Body of pancreas (tissue), 4 donors: ENCODE measurements at regions of chr16 and their contacts with region 1.

Region 1: GRCh38 chr16:813204-813915 is 12.8 kb upstream of the GNG13 start:
- DNase-seq: peak in 3 of 4 donors; percentile 27 to 48 (median 45)
- ATAC-seq: peak; percentile 45
- H3K4me3 ChIP-seq: no peak overlapping the region
- H3K27ac ChIP-seq: no peak overlapping the region
- H3K4me1 ChIP-seq: peaks cover 12% of the 10 kb centered on the region
- H3K27me3 ChIP-seq: peaks cover 0 to 21% of the 10 kb centered on the region in 2 donors
- CTCF ChIP-seq: peak in 6 of 7 experiments; percentile 28 to 59 (median 45)
- POLR2A ChIP-seq: no peak

Region 2: GRCh38 chr16:728131-728889 is 85.0 kb before region 1 on chr16:
- intact Hi-C with region 1: no loop called
- DNase-seq: peak in 3 of 4 donors; percentile 53 to 66 (median 57)
- ATAC-seq: peak; percentile 33
- H3K4me3 ChIP-seq: no peak overlapping the region
- H3K27ac ChIP-seq: no peak overlapping the region
- H3K4me1 ChIP-seq: peaks cover 31% of the 10 kb centered on the region
- H3K27me3 ChIP-seq: peaks cover 0 to 7% of the 10 kb centered on the region in 2 donors
- CTCF ChIP-seq: no peak
- POLR2A ChIP-seq: no peak

Region 3: DNA sequence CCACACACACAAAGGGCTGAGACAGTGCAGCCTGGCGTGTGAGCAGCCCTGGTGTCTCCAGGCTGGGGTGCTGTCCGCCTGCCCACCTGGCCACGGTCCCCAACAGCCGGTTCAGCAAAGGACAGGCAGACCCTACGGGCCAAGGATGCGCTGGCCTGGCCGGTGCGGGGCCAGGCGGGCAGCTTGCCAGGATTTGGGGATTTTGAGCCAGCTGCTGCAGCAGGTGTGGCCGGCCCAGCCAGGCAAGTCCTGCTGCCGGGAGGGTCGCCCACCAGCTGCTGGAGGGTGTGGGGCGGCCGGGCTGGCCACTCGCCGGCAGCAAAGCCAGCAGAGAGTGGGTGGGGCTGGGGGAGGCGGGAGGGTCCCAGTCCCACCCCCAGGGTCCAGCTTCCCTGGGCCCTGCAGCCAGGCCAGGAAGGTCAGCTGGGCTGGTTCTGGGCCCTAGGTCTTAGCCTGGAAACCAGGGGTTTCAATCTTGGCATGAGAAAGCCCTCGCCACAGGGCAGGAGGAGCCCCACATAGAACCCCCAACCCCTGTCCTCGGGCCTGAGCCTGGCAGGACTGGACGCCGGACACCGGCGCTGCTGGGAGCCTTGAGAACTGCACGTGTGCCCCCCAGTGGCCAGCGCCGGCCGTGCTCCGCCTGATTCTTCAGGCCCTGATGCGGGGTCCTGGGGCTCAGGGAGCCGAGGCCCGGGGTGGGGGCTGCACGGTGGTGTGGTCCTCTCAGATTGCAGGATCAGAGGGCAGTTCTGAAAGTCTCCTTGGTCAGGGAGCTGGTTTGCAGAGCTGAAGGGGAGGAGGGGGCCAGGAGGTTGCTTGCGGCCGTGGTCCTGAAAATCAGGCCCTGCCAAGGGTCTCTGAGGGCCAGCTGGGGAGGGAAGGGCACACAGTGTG is 241.5 kb after region 1 on chr16:
- intact Hi-C with region 1: loop called (anchors 5 kb)
- DNase-seq: peak; percentile 68 to 81 (median 72)
- ATAC-seq: peak; percentile 79
- H3K4me3 ChIP-seq: no peak overlapping the region
- H3K27ac ChIP-seq: no peak overlapping the region
- H3K4me1 ChIP-seq: peaks cover 5% of the 10 kb centered on the region
- H3K27me3 ChIP-seq: peaks cover 0 to 19% of the 10 kb centered on the region in 2 donors
- CTCF ChIP-seq: peak; percentile 74 to 86 (median 82)
- POLR2A ChIP-seq: no peak

Region 4: GRCh38 chr16:1093284-1094123 is 280.1 kb after region 1 on chr16:
- intact Hi-C with region 1: loop called (anchors 10 kb)
- DNase-seq: no peak
- ATAC-seq: no peak
- H3K4me3 ChIP-seq: no peak overlapping the region
- H3K27ac ChIP-seq: no peak overlapping the region
- H3K4me1 ChIP-seq: peaks cover 18% of the 10 kb centered on the region
- H3K27me3 ChIP-seq: peaks cover 0 to 33% of the 10 kb centered on the region in 2 donors
- CTCF ChIP-seq: no peak
- POLR2A ChIP-seq: no peak